Heart left ventricle (tissue), 16 donors: ENCODE measurements at regions of chr10 and their contacts with region 1.

Region 1: DNA sequence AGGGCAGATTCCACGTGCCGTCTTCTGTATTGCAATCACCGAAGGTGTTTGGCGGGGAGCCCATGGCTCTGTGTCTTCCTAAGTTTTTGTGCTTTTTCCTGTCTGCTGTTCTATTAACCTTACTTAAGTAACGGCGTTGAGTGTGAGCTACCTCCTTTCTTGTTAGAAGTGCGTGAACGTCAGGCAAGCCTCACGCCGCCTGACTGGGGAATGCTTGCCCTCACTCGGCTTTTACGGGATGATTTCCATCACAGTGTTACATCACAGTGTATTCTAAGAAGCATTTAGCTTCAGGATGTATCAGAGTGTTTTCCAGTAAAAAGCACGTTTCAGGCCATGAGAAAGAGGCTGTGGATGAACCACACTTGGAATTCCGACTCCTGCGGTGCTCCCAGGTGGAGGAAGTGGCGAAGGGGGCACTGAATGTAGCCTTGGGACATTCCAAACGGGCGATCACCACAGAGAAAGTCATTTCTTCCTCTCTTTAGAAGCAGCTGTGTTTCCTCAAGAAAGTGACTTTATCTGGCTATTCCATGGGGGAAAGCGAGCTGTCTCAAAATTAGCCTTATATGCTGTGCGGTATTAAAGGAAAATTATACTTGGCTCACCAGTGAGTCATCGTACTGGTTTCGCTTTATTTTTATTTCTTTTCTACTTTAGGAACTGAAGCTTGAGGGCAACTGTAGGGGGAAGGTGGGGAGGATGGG is 290.7 kb downstream of the KLF6 start:
- DNase-seq: peak in 2 of 5 donors; percentile 28 to 34
- ATAC-seq: peak; percentile 51 to 83 (median 67)
- H3K4me3 ChIP-seq: peak overlapping the region in 10 of 12 donors; percentile 15 to 50 (median 34)
- H3K27ac ChIP-seq: peak overlapping the region in 11 of 12 donors; percentile 36 to 88 (median 67)
- H3K4me1 ChIP-seq: peaks cover 0 to 16% (median 0%) of the 10 kb centered on the region in 12 donors
- H3K27me3 ChIP-seq: no peaks in the 10 kb centered on the region
- CTCF ChIP-seq: no peak
- POLR2A ChIP-seq: no peak

Region 2: DNA sequence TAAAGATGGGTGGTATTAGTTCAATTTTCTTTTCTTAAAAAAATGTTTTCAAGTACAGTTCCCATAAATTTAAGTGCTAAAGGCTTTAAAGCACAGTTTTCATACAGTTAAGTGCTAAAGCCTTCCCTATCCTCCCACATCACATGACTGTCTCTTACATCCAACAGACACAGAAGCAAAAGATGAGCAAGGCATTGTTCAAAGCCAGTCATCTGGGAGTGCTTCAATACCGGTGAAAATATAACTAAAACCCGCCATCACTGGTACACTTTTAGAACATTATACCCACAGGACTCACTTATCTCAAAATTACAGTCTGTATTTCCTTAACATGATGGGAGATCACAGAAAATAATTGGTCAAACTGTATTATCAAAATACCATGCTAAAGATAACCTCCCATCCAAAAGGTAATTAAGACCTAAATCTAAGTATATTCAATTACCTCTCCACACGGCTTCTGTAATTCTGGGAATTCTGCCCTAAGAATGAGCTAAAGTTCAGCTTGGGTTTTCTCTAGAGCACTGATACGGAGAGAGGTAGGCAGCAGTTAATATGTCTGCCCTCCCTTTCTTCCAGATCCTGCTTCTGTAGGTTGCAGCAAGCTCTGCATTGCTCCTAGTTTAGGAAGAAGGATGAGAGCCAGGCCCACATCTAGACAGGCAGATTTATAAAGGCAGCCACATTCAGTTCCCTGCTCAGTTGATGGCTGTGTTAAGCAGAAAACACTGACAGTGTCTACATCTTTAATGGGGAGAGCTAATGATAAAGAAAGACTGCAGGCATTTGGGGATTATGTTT is 901.7 kb before region 1 on chr10:
- intact Hi-C with region 1: no loop called
- DNase-seq: no peak
- ATAC-seq: no peak
- H3K4me3 ChIP-seq: no peak overlapping the region
- H3K27ac ChIP-seq: no peak overlapping the region
- H3K4me1 ChIP-seq: no peaks in the 10 kb centered on the region
- H3K27me3 ChIP-seq: peaks cover 0 to 4% (median 0%) of the 10 kb centered on the region in 9 donors
- CTCF ChIP-seq: no peak
- POLR2A ChIP-seq: no peak

Region 3: DNA sequence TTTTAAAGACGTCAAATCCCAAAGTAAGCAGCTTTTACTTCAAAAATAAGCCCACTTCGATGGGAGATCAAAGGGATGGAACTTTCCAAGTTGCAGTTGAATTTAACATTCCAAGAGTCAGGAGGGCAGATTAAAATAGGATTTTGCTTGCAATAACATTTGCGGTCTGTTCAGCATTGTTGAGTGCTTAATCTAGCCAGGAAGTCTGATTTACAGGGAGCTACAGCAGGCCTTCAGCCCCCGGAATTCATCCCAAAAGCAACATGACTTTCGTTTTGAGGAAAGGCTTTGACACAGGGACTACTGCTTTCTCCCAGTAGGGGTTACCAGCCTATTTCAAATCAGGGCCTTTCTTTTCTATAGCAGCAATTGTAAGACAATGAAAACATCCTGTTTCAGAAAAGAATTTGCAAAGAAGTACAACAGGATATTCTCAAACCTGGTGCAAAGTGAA is 42.1 kb before region 1 on chr10:
- intact Hi-C with region 1: no loop called
- DNase-seq: peak in 1 of 5 donors; percentile 50
- ATAC-seq: peak; percentile 62 to 92 (median 79)
- H3K4me3 ChIP-seq: peak overlapping the region in 3 of 12 donors; percentile 1 to 20 (median 15)
- H3K27ac ChIP-seq: peak overlapping the region; percentile 53 to 88 (median 76)
- H3K4me1 ChIP-seq: peaks cover 0 to 36% (median 21%) of the 10 kb centered on the region in 12 donors
- H3K27me3 ChIP-seq: no peaks in the 10 kb centered on the region
- CTCF ChIP-seq: peak; percentile 30 to 68 (median 47)
- POLR2A ChIP-seq: no peak

Region 4: DNA sequence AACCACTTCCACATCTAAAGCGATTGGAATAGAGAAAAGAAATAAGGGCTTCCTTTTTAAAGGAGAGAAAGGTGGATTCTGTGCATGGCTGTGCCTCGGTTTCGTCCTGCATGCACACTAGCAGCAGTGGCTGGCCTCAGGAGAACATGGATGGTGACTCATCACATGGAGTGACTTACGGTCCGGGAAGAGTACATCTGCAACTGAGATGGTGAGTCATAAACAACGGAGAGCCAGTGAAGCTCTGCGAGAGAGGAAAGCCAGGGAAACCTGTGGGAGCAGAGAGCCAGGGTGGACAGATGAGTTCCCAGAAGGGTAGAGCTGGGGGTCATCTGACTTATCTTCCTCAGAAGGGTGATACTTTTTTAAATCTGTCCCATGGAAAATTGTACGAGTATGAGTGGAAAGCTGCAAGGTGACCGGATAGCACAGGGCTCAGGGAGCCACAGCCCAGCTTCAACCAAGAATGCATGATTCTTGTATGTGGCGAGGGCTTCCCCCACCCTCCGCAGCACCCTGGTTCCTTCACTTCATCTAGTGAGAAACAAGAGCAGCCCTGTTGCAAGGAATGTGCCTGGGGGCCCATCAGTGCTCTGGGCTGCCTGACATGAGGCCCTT is 31.7 kb after region 1 on chr10:
- intact Hi-C with region 1: loop called in 1 of 10 experiments (anchors 5 kb)
- DNase-seq: peak in 2 of 5 donors; percentile 42 to 52
- ATAC-seq: peak in 3 of 4 donors; percentile 80 to 92 (median 89)
- H3K4me3 ChIP-seq: no peak overlapping the region
- H3K27ac ChIP-seq: peak overlapping the region in 9 of 12 donors; percentile 1 to 82 (median 66)
- H3K4me1 ChIP-seq: peaks cover 0 to 44% (median 20%) of the 10 kb centered on the region in 12 donors
- H3K27me3 ChIP-seq: no peaks in the 10 kb centered on the region
- CTCF ChIP-seq: no peak
- POLR2A ChIP-seq: no peak

Region 5: GRCh38 chr10:3605882-3606281 is 111.6 kb after region 1 on chr10:
- intact Hi-C with region 1: no loop called
- DNase-seq: no peak
- ATAC-seq: no peak
- H3K4me3 ChIP-seq: no peak overlapping the region
- H3K27ac ChIP-seq: no peak overlapping the region
- H3K4me1 ChIP-seq: no peaks in the 10 kb centered on the region
- H3K27me3 ChIP-seq: no peaks in the 10 kb centered on the region
- CTCF ChIP-seq: no peak
- POLR2A ChIP-seq: no peak

Region 6: DNA sequence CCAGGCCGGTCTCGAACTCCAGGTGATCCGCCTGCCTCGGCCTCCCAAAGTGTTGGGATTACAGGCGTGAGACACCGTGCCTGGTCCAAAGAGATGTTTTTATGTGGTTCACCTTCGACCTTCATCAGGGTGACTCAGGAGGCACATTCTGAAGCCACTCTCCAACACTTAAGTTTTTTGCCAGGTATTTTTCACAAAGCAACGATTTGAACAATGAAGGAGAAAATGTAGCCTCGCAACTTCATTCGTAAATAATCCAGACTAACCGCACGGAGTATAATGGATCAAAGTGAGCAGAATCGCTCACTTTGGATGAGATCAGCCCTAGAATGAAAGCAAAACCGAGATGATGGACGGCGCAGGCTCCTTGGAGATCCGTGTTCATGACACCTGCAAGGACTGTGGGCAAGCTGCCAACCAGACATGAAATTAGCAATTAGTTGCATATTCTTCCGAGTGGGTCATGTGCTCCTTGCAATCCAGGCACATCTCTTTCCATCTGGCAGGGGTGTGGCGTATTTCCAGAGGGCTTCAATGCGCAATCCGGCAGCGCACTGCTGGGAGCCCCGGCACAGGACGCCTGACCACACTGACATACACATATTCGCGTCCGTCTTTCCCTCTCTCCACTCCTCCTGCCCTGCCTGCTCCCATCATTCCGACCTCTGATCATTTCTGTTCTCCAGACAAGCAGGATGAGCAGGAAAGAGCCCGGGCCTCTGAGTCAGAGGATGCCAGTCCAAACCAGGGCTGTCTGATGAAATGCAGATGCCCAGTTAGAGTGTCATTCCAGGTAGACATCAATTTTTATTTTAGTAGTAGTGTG is 142.3 kb after region 1 on chr10:
- intact Hi-C with region 1: no loop called
- DNase-seq: no peak
- ATAC-seq: no peak
- H3K4me3 ChIP-seq: no peak overlapping the region
- H3K27ac ChIP-seq: no peak overlapping the region
- H3K4me1 ChIP-seq: no peaks in the 10 kb centered on the region
- H3K27me3 ChIP-seq: no peaks in the 10 kb centered on the region
- CTCF ChIP-seq: no peak
- POLR2A ChIP-seq: no peak